ENCODE measurements at regions of chr1 and their contacts with region 1.

Region 1: GRCh38 chr1:53182111-53182593 is 14.5 kb upstream of the CPT2 start:
- DNase-seq: peak; percentile 92
- H3K4me3 ChIP-seq: no peak overlapping the region
- H3K27ac ChIP-seq: peak overlapping the region; percentile 76 to 84 (median 80)
- H3K4me1 ChIP-seq: peaks cover 11 to 38% (median 21%) of the 10 kb centered on the region in 4 donors
- H3K27me3 ChIP-seq: no peaks in the 10 kb centered on the region
- CTCF ChIP-seq: peak; percentile 89 to 95 (median 93)
- EP300 ChIP-seq: no peak
- POLR2A ChIP-seq: no peak

Region 2: DNA sequence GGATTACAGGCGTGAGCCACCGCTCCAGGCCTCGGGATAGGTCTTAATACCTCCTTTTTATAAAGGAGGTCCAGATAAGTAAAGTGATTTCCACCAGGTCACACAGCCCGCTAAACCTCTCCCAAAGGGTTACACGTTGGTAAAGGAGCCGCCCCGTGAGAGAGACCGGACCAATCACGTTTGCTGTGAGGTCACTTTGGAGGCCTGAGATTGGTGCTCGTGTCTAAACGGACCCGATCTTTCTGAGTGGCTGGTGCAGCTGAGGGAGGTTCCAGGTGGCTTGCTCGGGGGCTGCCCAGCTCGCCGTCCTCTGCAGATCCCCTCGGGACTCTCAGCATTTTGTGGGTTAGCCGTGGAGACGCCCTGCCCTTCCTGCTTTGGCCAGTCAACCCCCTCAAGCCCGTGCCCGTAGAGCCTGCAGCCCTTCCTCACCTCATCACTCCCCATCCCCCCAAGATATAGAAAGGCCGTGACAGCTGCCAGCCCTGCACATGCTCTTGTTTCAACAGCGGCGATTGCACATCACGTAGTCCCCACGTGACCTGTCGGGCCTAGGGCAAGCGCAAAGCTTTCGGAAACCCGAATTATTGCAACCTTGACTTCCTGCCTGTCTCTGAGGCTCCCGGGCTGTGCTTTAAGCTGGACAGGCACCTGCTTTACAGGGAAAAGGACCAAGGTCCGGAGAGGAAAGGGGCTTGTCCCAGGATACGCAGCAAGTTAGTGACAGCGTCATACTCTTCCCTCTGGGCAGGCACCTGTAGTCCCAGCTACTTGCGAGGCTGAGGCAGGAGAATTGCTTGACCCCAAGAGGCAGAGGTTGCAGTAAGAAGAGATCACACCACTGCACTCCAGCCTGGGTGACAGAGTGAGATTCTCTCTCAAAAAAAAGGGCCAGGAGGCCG is 479.0 kb before region 1 on chr1:
- in situ Hi-C with region 1: loop called in 2 of 4 experiments (anchors 10 to 25 kb)
- intact Hi-C with region 1: no loop called
- DNase-seq: peak; percentile 93
- H3K4me3 ChIP-seq: peak overlapping the region; percentile 0 to 54 (median 36)
- H3K27ac ChIP-seq: peak overlapping the region; percentile 86 to 90 (median 88)
- H3K4me1 ChIP-seq: peaks cover 4 to 48% (median 31%) of the 10 kb centered on the region in 4 donors
- H3K27me3 ChIP-seq: no peaks in the 10 kb centered on the region
- CTCF ChIP-seq: no peak
- EP300 ChIP-seq: no peak
- POLR2A ChIP-seq: peak; percentile 57

Region 3: DNA sequence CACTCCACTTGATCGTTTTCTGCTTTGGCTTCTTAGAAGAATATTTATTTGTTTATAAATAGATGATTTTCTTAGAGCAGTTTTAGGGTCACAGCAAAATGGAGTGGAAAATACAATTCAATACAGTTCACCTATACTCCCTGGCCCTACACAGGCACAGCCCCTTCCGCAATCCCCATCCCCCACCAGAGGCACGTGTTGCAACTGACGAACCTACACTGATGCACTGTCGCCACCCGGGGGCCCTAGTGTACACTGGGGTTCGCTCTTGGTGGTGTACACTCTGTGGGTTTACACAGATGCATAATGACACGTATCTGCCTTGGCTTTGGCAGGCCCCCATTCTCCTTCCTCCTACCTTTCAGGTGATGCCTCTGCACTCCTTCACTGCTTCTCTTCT is 268.6 kb before region 1 on chr1:
- in situ Hi-C with region 1: loop called in 1 of 4 experiments (anchors 25 kb)
- intact Hi-C with region 1: loop called (anchors 10 kb)
- DNase-seq: no peak
- H3K4me3 ChIP-seq: no peak overlapping the region
- H3K27ac ChIP-seq: no peak overlapping the region
- H3K4me1 ChIP-seq: no peaks in the 10 kb centered on the region
- H3K27me3 ChIP-seq: no peaks in the 10 kb centered on the region
- CTCF ChIP-seq: no peak
- EP300 ChIP-seq: no peak
- POLR2A ChIP-seq: no peak

Region 4: DNA sequence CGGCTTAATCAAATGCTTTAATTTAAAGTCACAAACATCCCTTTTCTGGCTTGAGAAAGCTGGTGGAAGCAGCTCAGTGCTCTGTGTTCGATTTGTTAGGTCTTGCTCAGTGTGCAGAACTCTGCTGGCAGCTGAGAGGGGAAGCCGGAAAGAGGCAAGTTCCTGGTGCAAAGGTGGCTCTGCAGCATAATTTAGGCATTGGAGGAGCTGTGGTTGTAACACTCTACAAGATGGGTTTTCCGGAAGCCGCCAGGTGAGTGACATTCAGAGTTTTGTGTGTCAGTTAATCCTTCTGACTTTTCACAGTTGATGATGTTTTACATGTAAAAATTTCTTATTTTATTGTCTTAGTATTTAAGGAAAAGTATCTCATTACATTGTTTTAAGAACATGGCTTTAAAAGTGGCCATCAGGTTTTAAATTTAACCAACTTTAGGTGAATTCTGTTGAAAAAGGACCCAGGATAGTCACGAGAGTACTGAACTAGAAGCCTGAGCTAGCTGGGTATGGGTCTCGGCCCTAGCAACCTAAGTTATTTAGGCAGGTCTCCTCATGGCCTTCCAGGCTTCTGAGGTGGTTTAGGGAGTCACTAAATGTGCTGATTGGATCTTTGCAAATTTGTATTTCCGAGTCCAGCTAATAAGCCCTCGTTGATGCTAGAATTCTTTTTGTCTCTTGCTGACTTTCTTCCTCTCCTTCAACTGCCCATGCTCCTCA is 167.2 kb before region 1 on chr1:
- in situ Hi-C with region 1: no loop called
- intact Hi-C with region 1: loop called (anchors 10 kb)
- DNase-seq: peak; percentile 85
- H3K4me3 ChIP-seq: peak overlapping the region; percentile 22 to 83 (median 46)
- H3K27ac ChIP-seq: peak overlapping the region; percentile 53 to 82 (median 72)
- H3K4me1 ChIP-seq: peaks cover 7 to 32% (median 13%) of the 10 kb centered on the region in 4 donors
- H3K27me3 ChIP-seq: no peaks in the 10 kb centered on the region
- CTCF ChIP-seq: no peak
- EP300 ChIP-seq: no peak
- POLR2A ChIP-seq: peak; percentile 52